Psoas muscle (tissue), 8 donors: ENCODE measurements at regions of chr13 and their contacts with region 1.

Region 1: GRCh38 chr13:41054919-41055619 is 6.2 kb upstream of the WBP4 start:
- DNase-seq: no peak
- ATAC-seq: no peak
- H3K4me3 ChIP-seq: no peak overlapping the region
- H3K27ac ChIP-seq: peak overlapping the region; percentile 11
- H3K4me1 ChIP-seq: peaks cover 82% of the 10 kb centered on the region
- H3K27me3 ChIP-seq: no peaks in the 10 kb centered on the region
- CTCF ChIP-seq: no peak

Region 2: GRCh38 chr13:41019011-41019487 is 36.0 kb before region 1 on chr13 and contains the start of gene ELF1:
- intact Hi-C with region 1: loop called in 1 of 2 experiments (anchors 5 kb)
- DNase-seq: no peak
- ATAC-seq: peak; percentile 54 to 89 (median 85)
- H3K4me3 ChIP-seq: peak within 1 kb of the TSS; percentile 32
- H3K27ac ChIP-seq: peak within 1 kb of the TSS; percentile 26
- H3K4me1 ChIP-seq: peaks cover 33% of the 10 kb centered on the region
- H3K27me3 ChIP-seq: no peaks in the 10 kb centered on the region
- CTCF ChIP-seq: no peak
- total RNA-seq, gene ELF1: 20.5 to 25.9 (median 22.6) TPM